Activated CD4-positive, alpha-beta T cell treated with anti-CD3 and anti-CD28 coated beads, Interleukin-2, amount 10 ng/mL, durations not matched to agents 7 days and 5 days (primary cell): ENCODE measurements at regions of chr2 and their contacts with region 1.

Region 1: DNA sequence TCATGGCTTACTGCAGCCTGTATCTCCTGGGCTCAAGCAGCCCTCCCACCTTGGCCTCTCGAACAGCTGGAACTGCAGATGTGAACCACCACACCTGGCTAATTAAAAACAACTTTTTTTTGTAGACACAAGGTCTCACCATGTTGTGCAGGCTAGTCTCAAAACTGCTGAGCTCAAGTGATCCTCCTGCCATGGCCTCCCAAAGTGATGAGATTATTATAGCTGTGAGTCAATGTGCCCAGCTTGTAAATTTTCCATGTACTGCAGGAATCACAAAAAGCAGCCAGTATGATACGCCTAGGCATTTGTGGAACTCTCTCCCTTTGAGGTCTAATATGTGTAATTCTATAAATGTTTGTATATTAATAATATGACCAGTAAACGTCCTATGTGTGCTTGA is 59.9 kb downstream of the MSH6 start:
- DNase-seq: no peak
- H3K4me3 Mint-ChIP-seq: no peak overlapping the region
- H3K27ac Mint-ChIP-seq: no peak overlapping the region
- H3K4me1 Mint-ChIP-seq: peaks cover 15% of the 10 kb centered on the region
- H3K27me3 Mint-ChIP-seq: no peaks in the 10 kb centered on the region

Region 2: DNA sequence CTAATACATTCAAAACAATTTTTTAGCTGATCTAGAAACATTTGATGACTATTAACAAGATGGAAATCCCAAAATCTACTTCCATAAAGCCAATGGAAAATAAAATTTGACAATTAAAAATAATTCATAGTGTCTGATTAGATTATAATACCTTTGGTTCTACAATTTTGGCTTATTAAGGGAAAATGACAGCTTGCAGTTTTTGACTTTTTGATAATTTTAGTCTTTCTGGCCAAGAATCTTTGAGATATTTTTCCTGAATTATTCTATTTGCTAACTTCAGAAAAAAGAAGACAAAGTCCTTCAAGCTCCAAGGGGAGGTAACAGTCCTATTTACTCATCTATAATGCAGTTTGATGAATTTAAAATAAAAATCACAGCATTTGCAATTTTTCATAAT is 20.3 kb before region 1 on chr2:
- CTCF ChIA-PET with region 1: no interaction called
- POLR2A ChIA-PET with region 1: no interaction called
- DNase-seq: no peak
- H3K4me3 Mint-ChIP-seq: no peak overlapping the region
- H3K27ac Mint-ChIP-seq: no peak overlapping the region
- H3K4me1 Mint-ChIP-seq: no peaks in the 10 kb centered on the region
- H3K27me3 Mint-ChIP-seq: no peaks in the 10 kb centered on the region

Region 3: GRCh38 chr2:47870641-47871540 is 28.0 kb after region 1 on chr2:
- CTCF ChIA-PET with region 1: interaction called, 4 read pairs
- POLR2A ChIA-PET with region 1: interaction called, 11 read pairs
- DNase-seq: no peak
- H3K4me3 Mint-ChIP-seq: no peak overlapping the region
- H3K27ac Mint-ChIP-seq: no peak overlapping the region
- H3K4me1 Mint-ChIP-seq: peaks cover 42% of the 10 kb centered on the region
- H3K27me3 Mint-ChIP-seq: no peaks in the 10 kb centered on the region

Region 4: DNA sequence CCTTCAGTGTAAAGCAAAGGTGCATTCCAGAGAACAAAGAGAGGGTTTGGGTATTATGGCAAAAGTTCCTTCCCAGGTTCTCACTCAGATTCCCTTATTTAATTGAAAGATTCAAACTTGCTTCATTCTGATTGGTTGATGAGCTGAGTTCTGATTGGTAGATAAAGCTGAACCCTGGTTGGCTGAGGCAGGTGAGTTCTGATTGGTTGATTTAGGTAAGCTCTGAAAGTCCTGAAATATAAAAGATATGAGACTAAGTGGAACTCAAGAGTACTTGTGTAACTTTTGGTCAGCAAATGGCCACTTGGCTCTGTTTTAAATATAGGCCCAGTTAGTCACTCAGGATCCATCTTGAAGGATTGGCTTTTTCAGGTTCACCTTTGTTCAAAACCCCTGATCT is 163.2 kb after region 1 on chr2:
- CTCF ChIA-PET with region 1: no interaction called
- POLR2A ChIA-PET with region 1: no interaction called
- DNase-seq: no peak
- H3K4me3 Mint-ChIP-seq: no peak overlapping the region
- H3K27ac Mint-ChIP-seq: no peak overlapping the region
- H3K4me1 Mint-ChIP-seq: no peaks in the 10 kb centered on the region
- H3K27me3 Mint-ChIP-seq: peaks cover 6% of the 10 kb centered on the region